A673 (cell line): ENCODE measurements at regions of chr6 and their contacts with region 1.

Region 1: DNA sequence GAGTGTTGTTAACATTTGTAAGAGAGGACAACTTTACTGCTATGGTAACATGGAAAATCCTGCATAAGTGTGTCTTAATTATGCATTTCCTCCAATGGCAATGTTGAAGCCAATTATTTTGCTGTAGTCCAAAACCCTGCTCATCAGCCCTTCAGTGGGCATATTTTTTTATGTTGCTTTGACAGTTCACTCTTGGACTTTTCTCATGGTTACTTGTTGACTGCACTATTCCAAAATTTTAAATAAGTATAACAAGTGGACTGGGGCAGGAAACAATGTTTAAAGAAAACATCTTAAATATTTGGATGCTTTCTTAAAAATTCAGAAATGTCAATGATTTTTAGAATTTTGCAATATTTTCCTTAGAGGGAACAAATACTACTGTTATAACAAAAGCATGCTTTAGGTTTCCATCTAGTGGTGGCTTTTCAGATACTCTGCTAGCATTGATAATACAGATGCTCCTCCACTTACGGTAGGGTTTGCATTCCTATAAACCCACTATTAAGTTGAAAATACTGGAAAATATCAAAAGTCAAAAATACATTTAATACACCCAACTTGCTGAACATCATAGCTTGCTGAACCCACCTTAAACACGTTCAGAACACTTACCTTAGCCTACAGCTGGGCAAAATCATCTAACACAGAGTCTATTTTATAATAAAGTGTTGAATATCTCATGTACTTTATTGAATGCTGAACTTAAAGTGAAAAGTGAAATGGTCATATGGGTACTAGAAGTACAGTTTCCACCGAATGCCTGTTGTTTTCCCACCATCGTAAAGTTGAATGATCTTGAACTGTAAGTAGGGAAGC is 86.4 kb downstream of the ADGRG6 start:
- DNase-seq: peak; percentile 67
- H3K4me3 ChIP-seq: no peak overlapping the region
- H3K27ac ChIP-seq: no peak overlapping the region
- H3K4me1 ChIP-seq: no peaks in the 10 kb centered on the region
- H3K27me3 ChIP-seq: no peaks in the 10 kb centered on the region
- CTCF ChIP-seq: peak; percentile 78

Region 2: GRCh38 chr6:142155895-142156757 is 232.1 kb before region 1 on chr6:
- CTCF ChIA-PET with region 1: no interaction called
- POLR2A ChIA-PET with region 1: no interaction called
- intact Hi-C with region 1: loop called (anchors 5 kb)
- DNase-seq: peak; percentile 47
- H3K4me3 ChIP-seq: no peak overlapping the region
- H3K27ac ChIP-seq: peak overlapping the region; percentile 17
- H3K4me1 ChIP-seq: peaks cover 9% of the 10 kb centered on the region
- H3K27me3 ChIP-seq: no peaks in the 10 kb centered on the region
- CTCF ChIP-seq: peak; percentile 67

Region 3: GRCh38 chr6:142236691-142237090 is 151.5 kb before region 1 on chr6:
- CTCF ChIA-PET with region 1: interaction called, 3 read pairs
- POLR2A ChIA-PET with region 1: no interaction called
- intact Hi-C with region 1: loop called (anchors 10 kb)
- DNase-seq: no peak
- H3K4me3 ChIP-seq: no peak overlapping the region
- H3K27ac ChIP-seq: no peak overlapping the region
- H3K4me1 ChIP-seq: no peaks in the 10 kb centered on the region
- H3K27me3 ChIP-seq: no peaks in the 10 kb centered on the region
- CTCF ChIP-seq: no peak

Region 4: DNA sequence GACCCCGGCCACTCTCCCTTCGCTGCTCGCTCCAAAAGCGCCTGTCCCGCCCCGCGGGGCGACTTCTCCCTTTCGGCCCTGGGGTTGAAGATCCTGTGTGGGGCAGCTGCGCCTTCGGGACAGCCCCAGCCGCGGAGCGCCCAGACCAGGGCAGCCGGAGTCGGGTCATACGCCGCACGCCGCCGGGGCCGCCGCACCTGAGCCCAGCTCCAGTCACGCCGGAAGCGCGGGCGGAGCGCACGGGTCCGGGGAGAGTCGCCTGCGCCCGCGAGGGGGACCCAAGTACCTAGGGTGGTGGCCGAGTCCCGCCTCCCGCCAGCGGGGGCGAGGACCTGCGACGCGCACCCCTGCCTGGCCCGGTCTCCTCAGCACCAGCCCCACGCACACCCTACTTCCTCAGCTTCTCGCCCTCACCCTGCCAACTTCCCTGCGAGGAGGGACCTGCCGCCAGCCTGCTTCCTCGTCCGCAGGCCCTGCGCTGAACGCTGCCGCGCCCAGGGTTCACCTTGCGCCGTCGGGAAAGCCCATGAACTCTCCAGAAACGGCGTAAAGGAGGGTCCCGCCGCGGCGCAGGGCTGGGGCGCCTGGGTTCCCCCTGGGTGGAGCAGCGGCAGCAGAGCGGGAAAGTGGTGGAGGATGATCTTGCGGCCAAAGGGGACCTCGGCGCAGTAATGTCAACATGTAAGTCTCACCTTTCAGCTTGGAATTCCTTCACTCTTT is 86.4 kb before region 1 on chr6 and contains the start of gene ADGRG6:
- CTCF ChIA-PET with region 1: no interaction called
- POLR2A ChIA-PET with region 1: no interaction called
- intact Hi-C with region 1: loop called (anchors 5 kb)
- DNase-seq: peak; percentile 33
- H3K4me3 ChIP-seq: peak within 1 kb of the TSS; percentile 68
- H3K27ac ChIP-seq: no peak within 1 kb of the TSS
- H3K4me1 ChIP-seq: no peaks in the 10 kb centered on the region
- H3K27me3 ChIP-seq: no peaks in the 10 kb centered on the region
- CTCF ChIP-seq: peak; percentile 17; the same call in 1 of the 2 replicates
- total RNA-seq, gene ADGRG6: 0.46 and 0.49 TPM in 2 replicates